Natural killer cell (primary cell): ENCODE measurements at regions of chr9 and their contacts with region 1.

Region 1: GRCh38 chr9:33446946-33447798 is at the start of gene AQP3:
- DNase-seq: peak; percentile 49 to 85
- ATAC-seq: peak; percentile 77 to 82 (median 81)
- H3K4me3 ChIP-seq: peak within 1 kb of the TSS; percentile 54
- H3K4me3 Mint-ChIP-seq: peak within 1 kb of the TSS; percentile 91
- H3K27ac ChIP-seq: peak within 1 kb of the TSS; percentile 73
- H3K27ac Mint-ChIP-seq: peak within 1 kb of the TSS; percentile 85 to 92
- H3K4me1 ChIP-seq: peaks cover 31% of the 10 kb centered on the region
- H3K4me1 Mint-ChIP-seq: peaks cover 13 to 30% of the 10 kb centered on the region in 2 donors
- H3K27me3 ChIP-seq: no peaks in the 10 kb centered on the region
- H3K27me3 Mint-ChIP-seq: no peaks in the 10 kb centered on the region
- CTCF ChIP-seq: peak; percentile 16
- total RNA-seq, gene AQP3: 3.9 to 12.7 (median 6.1) TPM

Region 2: GRCh38 chr9:33426843-33427293 is 20.3 kb before region 1 on chr9:
- intact Hi-C with region 1: loop called (anchors 2 kb)
- DNase-seq: peak; percentile 36 to 42
- ATAC-seq: peak; percentile 80 to 89 (median 86)
- H3K4me3 ChIP-seq: no peak overlapping the region
- H3K4me3 Mint-ChIP-seq: no peak overlapping the region
- H3K27ac ChIP-seq: peak overlapping the region; percentile 61
- H3K27ac Mint-ChIP-seq: peak overlapping the region; percentile 21 to 79
- H3K4me1 ChIP-seq: peaks cover 18% of the 10 kb centered on the region
- H3K4me1 Mint-ChIP-seq: peaks cover 0 to 14% of the 10 kb centered on the region in 2 donors
- H3K27me3 ChIP-seq: no peaks in the 10 kb centered on the region
- H3K27me3 Mint-ChIP-seq: no peaks in the 10 kb centered on the region
- CTCF ChIP-seq: no peak

Region 3: GRCh38 chr9:33473643-33474352 is 26.6 kb after region 1 on chr9 and contains the start of gene NOL6:
- intact Hi-C with region 1: loop called (anchors 2 kb)
- DNase-seq: peak; percentile 97 to 99
- ATAC-seq: peak; percentile 98 to 100 (median 98)
- H3K4me3 ChIP-seq: peak within 1 kb of the TSS; percentile 97
- H3K4me3 Mint-ChIP-seq: peak within 1 kb of the TSS; percentile 100
- H3K27ac ChIP-seq: peak within 1 kb of the TSS; percentile 75
- H3K27ac Mint-ChIP-seq: peak within 1 kb of the TSS; percentile 93 to 96
- H3K4me1 ChIP-seq: peaks cover 15% of the 10 kb centered on the region
- H3K4me1 Mint-ChIP-seq: peaks cover 20 to 21% of the 10 kb centered on the region in 2 donors
- H3K27me3 ChIP-seq: no peaks in the 10 kb centered on the region
- H3K27me3 Mint-ChIP-seq: no peaks in the 10 kb centered on the region
- CTCF ChIP-seq: no peak
- total RNA-seq, gene NOL6: 34.2 to 42.2 (median 38.2) TPM